ENCODE measurements at regions of chr12 and their contacts with region 1.

Region 1: GRCh38 chr12:73158341-73158740 is 886.2 kb downstream of the TRHDE start:
- DNase-seq: no peak
- H3K4me3 ChIP-seq: no peak overlapping the region
- H3K27ac ChIP-seq: no peak overlapping the region
- H3K4me1 ChIP-seq: no peaks in the 10 kb centered on the region
- H3K27me3 ChIP-seq: no peaks in the 10 kb centered on the region
- CTCF ChIP-seq: no peak
- POLR2A ChIP-seq: no peak

Region 2: DNA sequence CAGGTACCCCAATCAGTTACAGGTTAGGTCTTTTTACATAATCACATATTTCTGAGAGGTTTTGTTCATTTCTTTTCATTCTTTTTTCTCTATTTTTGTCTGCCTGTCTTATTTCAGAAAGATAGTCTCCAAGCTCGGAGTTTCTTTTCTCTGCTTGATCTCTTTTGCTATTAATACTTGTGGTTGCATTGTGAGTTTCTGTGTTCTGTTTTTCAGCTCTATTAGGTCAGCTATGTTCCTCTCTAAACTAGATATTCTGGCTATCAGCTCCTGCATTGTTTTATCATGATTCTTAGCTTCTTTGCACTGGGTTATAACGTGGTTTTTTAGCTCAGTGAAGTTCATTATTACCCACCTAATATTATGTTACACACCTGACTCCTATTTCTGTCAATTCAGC is 27.9 kb after region 1 on chr12:
- intact Hi-C with region 1: loop called in 1 of 2 experiments (anchors 2 kb)
- DNase-seq: no peak
- H3K4me3 ChIP-seq: no peak overlapping the region
- H3K27ac ChIP-seq: no peak overlapping the region
- H3K4me1 ChIP-seq: no peaks in the 10 kb centered on the region
- H3K27me3 ChIP-seq: no peaks in the 10 kb centered on the region
- CTCF ChIP-seq: no peak
- POLR2A ChIP-seq: no peak

Region 3: GRCh38 chr12:73235387-73235786 is 77.0 kb after region 1 on chr12:
- intact Hi-C with region 1: no loop called
- DNase-seq: no peak
- H3K4me3 ChIP-seq: no peak overlapping the region
- H3K27ac ChIP-seq: no peak overlapping the region
- H3K4me1 ChIP-seq: no peaks in the 10 kb centered on the region
- H3K27me3 ChIP-seq: no peaks in the 10 kb centered on the region
- CTCF ChIP-seq: no peak
- POLR2A ChIP-seq: no peak